ENCODE measurements at regions of chr19 and their contacts with region 1.

Region 1: GRCh38 chr19:48445606-48446481 is at the start of gene GRWD1:
- DNase-seq: peak; percentile 85 to 97 (median 93)

Region 2: DNA sequence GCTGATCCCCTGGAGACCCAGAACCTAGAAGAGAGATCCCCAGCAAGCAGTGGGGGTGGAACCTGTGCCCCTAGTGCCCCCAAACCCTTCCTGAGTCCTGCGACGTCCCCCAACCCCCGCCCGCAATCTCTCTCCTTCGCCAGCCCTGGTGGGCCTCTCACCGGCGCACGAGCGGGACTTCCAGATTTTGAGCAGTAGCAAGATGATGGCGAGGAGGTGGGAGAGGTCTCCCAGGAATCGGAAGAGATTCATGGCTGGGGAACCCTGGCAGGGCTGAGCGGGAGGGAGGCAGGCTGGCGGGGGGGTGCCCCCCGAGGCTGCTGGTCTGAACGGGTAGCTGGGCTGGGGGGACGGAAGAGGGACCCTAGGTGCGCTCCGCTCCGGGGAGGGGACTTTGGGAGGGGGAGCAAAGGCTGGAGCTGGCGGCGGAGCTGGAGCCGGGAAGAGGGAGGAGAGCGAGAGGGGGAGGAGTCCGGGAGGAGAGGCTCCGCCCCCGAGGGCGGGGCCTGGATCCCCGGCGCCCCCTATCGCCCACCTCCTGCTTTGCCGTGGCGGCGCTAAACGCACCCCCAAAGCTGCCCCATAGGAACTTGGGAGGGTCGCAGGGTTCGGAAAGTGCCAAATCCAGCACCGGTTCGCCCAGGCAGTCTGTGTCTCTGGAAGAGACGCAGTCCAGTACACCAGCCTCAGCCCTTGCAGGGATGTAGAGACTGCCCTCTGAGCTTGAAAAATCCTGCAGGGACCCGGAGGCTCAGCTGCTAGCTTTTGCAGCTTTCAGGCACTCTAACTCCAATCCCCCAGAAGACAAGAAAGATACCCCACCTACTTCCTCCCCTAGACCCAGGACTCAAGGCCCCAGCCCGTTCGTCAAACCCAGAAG is 54.5 kb before region 1 on chr19 and contains the start of gene KDELR1:
- intact Hi-C with region 1: loop called (anchors 10 kb)
- DNase-seq: peak; percentile 61 to 94 (median 88)

Measured in head of caudate nucleus (tissue), 42 donors.